ENCODE measurements at regions of chr2 and their contacts with region 1.

Region 1: DNA sequence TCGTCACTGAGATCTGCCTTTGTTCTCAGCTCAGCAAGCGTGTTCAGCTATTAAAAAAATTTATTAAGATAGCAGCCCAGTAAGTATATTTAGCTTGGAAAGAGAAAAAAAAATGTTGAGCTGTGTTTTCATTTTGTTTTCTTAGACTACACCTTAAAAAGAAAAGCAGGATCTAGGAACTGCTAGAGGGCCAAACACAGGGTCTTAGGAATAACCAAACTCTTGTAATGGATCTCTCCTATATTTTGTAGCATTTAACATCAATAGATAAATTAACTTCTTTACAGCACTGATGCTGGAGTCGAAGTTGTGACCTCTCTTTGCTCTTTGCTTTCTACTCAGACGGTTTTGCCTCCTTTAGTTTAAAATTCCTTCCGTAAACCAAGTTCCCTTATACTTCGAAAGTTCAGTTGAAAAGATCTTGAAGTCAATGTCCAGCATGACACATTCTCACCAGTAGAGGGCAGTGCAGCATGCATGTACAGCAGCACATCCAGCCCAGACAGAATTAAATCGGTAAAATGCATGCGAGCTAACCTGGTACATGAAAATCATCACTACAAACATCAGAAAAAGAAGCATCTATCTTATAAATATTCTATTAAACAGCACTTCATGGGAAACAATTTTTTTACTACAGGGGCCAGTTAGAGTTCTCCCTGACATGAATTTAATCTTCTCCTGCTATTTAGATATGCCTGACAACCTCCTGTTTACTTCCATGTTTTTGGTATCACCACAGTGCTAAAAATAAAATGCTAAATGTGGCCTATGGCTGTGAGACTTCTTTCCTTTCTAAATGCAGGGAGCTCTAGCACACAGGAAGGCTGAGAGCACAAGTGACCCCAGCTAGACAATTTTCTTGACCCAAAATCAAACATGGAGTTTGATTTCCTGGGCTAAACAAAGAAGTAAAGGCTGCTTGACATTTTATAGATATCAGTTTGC is 48.2 kb upstream of the MAP3K20 start:
- ATAC-seq: peak; percentile 74 to 85 (median 77)
- H3K4me3 ChIP-seq: no peak overlapping the region
- H3K27ac ChIP-seq: no peak overlapping the region
- H3K4me1 ChIP-seq: peaks cover 4% of the 10 kb centered on the region in 2 donors

Region 2: DNA sequence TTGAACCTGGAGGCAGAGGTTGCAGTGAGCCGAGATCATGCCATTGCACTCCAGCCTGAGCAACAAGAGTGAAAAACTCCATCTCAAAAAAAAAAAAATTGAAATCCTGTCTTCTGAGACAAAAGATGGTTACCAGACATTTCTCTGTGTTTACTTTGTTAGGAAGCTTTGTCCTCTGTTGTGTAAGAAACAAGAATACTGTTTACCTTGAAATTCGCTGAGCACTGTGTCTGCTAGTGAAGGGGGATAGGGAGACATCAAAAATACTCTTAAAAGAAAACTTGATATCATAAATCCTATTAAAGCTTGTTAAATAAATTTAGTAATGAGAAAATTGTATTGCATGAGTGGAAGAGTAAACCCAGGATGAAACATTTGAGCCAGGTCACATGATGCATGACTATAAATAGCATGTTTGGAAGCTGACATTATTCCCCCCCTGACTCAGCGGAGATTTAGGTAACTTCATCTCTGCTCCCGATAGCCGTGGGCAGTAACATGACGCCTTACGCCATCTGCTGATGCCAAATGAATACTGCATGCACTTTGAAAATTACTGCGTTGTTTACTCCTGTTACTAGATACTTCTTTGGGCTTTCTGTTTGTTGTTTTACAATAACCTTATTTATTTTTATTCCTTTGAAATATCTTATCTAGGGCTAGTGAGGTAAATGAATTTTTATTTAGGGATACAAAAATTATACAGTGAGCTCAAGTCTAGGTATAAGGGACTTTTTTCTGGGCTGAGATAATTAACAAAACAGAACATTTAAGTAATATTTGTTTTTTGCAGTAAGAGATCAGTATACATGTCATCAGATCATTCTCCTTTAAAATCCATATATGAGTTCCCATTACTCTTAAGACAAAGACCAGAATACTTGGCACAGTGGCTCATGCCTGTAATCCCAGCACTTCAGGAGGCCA is 183.1 kb after region 1 on chr2:
- in situ Hi-C with region 1: loop called (anchors 10 to 25 kb)
- ATAC-seq: peak; percentile 97 to 100 (median 98)
- H3K4me3 ChIP-seq: no peak overlapping the region
- H3K27ac ChIP-seq: no peak overlapping the region
- H3K4me1 ChIP-seq: peaks cover 0 to 4% of the 10 kb centered on the region in 2 donors

Region 3: DNA sequence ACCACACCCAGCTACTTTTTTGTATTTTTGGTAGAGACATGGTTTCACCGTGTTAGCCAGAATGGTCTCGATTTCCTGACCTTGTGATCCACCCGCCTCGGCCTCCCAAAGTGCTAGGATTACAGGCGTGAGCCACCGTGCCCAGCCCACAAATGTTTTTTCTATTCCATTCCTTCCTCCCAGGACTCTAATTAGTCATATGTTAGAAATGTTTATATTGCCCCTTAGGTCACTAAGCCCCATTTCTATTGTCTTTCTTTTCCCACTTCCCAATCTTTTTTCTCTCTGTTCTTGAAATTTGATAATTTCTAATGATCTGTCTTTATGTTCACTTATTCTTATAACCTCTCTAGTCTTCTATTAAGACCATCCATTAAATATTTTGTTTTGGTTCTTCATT is 295.9 kb after region 1 on chr2:
- in situ Hi-C with region 1: no loop called
- ATAC-seq: no peak
- H3K4me3 ChIP-seq: no peak overlapping the region
- H3K27ac ChIP-seq: no peak overlapping the region
- H3K4me1 ChIP-seq: no peaks in the 10 kb centered on the region